Activated naive CD8-positive, alpha-beta T cell treated with anti-CD3 and anti-CD28 coated beads, Interleukin-2, amount 10 ng/mL, durations not matched to agents 7 days and 5 days (primary cell): ENCODE measurements at regions of chr2 and their contacts with region 1.

Region 1: DNA sequence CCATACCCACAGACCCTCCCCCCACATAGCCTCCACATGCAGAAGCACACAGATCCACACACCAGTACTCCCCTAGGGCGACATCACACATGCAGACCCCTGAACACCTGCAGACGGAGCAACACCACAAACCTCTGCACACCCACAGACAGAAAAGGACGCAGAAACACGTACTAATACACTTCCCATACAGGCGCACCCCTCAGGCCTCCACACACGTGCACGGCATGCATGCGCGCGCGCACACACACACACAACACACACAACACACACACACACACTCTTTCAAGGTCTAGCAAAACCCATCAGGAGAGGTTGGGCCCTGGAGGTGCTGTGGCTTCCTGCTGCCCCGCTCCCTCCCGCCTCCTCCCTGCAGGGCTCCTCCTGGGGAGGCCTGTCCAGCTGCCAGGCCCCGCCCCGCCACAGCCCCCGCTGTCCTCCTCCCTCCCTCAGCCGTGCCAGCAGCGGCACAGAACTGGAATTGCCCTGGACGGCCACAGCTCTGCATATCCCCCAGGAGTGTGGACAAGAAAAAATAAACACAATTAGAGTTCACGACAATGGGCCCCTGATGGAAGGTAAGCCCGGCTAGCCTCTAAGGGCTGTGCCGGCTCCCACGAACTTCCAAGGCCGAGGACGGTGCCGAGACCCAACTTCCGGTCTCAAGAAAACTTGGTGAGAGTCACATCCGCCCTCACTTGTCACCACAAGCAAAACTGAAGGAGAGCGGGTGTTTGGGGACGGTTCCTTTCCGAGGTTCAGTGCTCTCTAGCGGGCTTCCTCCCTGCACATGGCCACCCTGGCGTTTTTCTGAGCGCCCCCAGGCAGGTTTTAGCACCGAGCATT is 6.8 kb downstream of the ZFP36L2 start:
- DNase-seq: peak; percentile 89
- ATAC-seq: peak; percentile 59
- H3K4me3 Mint-ChIP-seq: peak overlapping the region; percentile 95
- H3K27ac Mint-ChIP-seq: peak overlapping the region; percentile 99
- H3K4me1 Mint-ChIP-seq: peaks cover 36% of the 10 kb centered on the region
- H3K27me3 Mint-ChIP-seq: no peaks in the 10 kb centered on the region

Region 2: GRCh38 chr2:43149482-43150107 is 70.0 kb before region 1 on chr2:
- POLR2A ChIA-PET with region 1: interaction called, 1,375 read pairs
- DNase-seq: peak; percentile 54
- ATAC-seq: peak; percentile 81
- H3K4me3 Mint-ChIP-seq: peak overlapping the region; percentile 61
- H3K27ac Mint-ChIP-seq: peak overlapping the region; percentile 89
- H3K4me1 Mint-ChIP-seq: peaks cover 46% of the 10 kb centered on the region
- H3K27me3 Mint-ChIP-seq: no peaks in the 10 kb centered on the region

Region 3: GRCh38 chr2:43186679-43187374 is 32.8 kb before region 1 on chr2:
- POLR2A ChIA-PET with region 1: interaction called, 585 read pairs
- DNase-seq: no peak
- ATAC-seq: no peak
- H3K4me3 Mint-ChIP-seq: no peak overlapping the region
- H3K27ac Mint-ChIP-seq: peak overlapping the region; percentile 28
- H3K4me1 Mint-ChIP-seq: peaks cover 27% of the 10 kb centered on the region
- H3K27me3 Mint-ChIP-seq: no peaks in the 10 kb centered on the region

Region 4: DNA sequence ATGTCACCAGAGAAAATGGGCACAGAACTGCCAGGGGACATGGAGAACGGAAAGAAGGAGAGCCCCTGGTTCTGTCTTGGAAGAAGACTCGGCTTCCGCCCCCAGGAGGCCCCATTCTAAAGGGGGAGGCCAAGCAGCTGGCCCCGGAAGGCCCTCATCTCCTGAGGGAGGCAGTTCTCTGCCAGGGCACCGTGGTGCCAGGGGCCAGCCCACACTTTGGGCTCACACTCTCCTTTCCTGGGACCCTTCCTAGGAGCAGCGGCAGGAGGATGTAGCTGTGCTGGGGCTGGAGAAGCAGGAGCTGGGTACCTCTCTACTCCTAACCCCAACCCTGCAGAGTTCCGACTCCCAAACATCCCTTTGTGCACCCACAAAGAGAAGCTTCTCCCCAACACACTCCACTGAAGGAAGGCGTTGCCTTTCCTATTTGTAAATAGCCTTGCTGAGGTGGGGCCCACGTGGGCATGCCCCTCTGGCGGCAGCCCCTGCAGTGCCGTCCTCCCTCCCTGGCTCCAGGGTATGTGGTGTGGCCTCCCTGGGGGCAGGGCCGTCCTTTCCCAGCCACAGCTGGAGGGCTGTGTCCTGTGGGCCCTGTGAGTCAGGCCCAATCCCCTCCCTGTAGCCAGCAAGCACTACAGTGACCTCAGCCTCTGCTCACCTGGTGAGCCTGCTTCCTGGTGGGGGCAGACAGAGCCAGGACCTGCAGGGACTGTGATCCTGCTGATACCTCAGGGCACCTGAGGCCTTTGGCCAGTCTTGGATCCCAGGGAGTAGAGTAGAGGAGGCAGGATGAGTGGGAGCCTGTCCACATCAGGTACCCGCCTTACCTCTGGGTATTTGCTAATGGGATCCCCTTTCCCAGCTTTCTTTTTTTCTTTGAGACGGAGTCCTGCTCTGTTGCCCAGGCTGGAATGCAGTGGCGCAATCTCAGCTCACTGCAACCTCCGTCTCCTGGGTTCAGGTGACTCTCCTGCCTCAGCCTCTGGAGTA is 19.8 kb before region 1 on chr2:
- POLR2A ChIA-PET with region 1: interaction called, 238 read pairs
- DNase-seq: no peak
- ATAC-seq: no peak
- H3K4me3 Mint-ChIP-seq: no peak overlapping the region
- H3K27ac Mint-ChIP-seq: peak overlapping the region; percentile 9
- H3K4me1 Mint-ChIP-seq: peaks cover 44% of the 10 kb centered on the region
- H3K27me3 Mint-ChIP-seq: no peaks in the 10 kb centered on the region

Region 5: GRCh38 chr2:43239981-43240761 is 20.6 kb after region 1 on chr2:
- POLR2A ChIA-PET with region 1: no interaction called
- DNase-seq: no peak
- ATAC-seq: no peak
- H3K4me3 Mint-ChIP-seq: no peak overlapping the region
- H3K27ac Mint-ChIP-seq: no peak overlapping the region
- H3K4me1 Mint-ChIP-seq: peaks cover 3% of the 10 kb centered on the region
- H3K27me3 Mint-ChIP-seq: no peaks in the 10 kb centered on the region

Region 6: DNA sequence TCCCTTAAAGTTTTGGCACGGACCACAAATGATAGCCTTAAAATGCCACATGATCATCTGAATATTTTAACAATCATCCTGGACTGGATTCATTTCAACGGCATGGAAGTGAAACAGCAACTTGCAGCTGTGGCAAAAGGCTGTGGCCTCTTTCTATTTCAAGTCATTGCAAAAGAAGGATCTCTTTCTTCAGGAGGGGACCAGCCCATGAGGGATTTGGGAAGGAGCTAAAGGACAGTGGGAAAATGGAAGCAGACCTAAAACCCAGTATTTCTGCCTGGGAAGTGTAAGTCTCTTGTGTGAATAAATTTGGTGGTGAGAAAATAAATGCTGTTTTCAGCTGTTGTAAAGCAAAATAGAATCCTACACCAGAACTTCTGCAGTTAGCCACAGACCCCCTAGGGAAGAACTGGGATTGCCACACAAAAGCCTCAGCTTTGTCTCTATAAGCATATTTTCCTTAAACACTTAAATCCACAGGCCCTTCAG is 114.1 kb after region 1 on chr2:
- POLR2A ChIA-PET with region 1: no interaction called
- DNase-seq: no peak
- ATAC-seq: no peak
- H3K4me3 Mint-ChIP-seq: no peak overlapping the region
- H3K27ac Mint-ChIP-seq: no peak overlapping the region
- H3K4me1 Mint-ChIP-seq: peaks cover 6% of the 10 kb centered on the region
- H3K27me3 Mint-ChIP-seq: no peaks in the 10 kb centered on the region